ENCODE measurements at regions of chr22 and their contacts with region 1.

Region 1: DNA sequence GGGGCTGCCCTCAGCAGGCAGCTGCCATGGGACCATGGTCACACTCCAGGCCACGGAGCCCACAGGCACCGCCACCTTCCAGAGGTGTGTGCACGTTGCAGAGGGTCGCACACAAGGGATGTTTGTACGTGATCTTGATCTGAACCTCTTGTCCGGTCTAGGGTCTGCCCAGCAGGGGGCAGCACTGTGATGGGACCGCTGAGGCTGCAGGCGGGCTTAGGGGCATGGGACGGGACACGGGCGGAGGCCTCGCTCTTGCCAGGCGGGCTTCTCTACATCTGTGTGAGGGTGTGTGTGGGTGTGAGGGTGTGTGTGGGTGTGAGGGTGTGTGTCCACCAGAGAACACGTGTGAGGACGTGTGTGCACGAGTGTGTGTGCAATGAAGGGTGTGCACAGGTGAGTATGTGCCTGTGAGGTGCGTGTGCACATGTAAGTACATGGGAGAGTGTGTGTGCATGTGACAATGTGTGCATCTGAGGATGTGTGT is 52.4 kb downstream of the CACNA1I start:
- DNase-seq: peak; percentile 67 to 82
- ATAC-seq: peak; percentile 58 to 80 (median 76)
- H3K4me3 ChIP-seq: no peak overlapping the region
- H3K4me3 Mint-ChIP-seq: no peak overlapping the region
- H3K27ac ChIP-seq: no peak overlapping the region
- H3K27ac Mint-ChIP-seq: no peak overlapping the region
- H3K4me1 ChIP-seq: peaks cover 11% of the 10 kb centered on the region
- H3K4me1 Mint-ChIP-seq: peaks cover 6 to 14% of the 10 kb centered on the region in 2 donors
- H3K27me3 ChIP-seq: peaks cover 9% of the 10 kb centered on the region
- H3K27me3 Mint-ChIP-seq: peaks cover 0 to 32% of the 10 kb centered on the region in 2 donors
- CTCF ChIP-seq: peak; percentile 44

Region 2: DNA sequence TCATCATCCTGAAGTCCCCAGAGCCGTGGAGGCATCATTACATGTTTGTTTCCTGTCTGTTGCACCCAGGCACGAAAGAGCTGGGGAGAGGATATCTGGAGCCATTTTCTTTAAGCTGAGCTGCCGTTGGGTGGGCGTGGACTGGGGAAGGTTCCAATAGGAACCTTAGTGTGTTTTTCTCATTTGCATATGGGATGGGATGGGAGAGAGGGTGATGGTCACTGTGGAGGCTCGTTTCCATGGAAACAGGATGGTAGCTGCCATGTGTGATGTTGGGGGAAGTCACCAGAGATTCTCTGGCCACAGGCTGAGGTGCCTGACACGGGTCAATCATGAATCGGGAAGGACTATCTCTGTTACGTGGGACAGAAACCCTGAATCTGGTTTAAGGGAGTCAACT is 12.7 kb before region 1 on chr22:
- intact Hi-C with region 1: no loop called
- DNase-seq: no peak
- ATAC-seq: no peak
- H3K4me3 ChIP-seq: no peak overlapping the region
- H3K4me3 Mint-ChIP-seq: no peak overlapping the region
- H3K27ac ChIP-seq: no peak overlapping the region
- H3K27ac Mint-ChIP-seq: no peak overlapping the region
- H3K4me1 ChIP-seq: no peaks in the 10 kb centered on the region
- H3K4me1 Mint-ChIP-seq: peaks cover 6 to 10% of the 10 kb centered on the region in 2 donors
- H3K27me3 ChIP-seq: peaks cover 5% of the 10 kb centered on the region
- H3K27me3 Mint-ChIP-seq: peaks cover 12 to 16% of the 10 kb centered on the region in 2 donors
- CTCF ChIP-seq: no peak

Region 3: DNA sequence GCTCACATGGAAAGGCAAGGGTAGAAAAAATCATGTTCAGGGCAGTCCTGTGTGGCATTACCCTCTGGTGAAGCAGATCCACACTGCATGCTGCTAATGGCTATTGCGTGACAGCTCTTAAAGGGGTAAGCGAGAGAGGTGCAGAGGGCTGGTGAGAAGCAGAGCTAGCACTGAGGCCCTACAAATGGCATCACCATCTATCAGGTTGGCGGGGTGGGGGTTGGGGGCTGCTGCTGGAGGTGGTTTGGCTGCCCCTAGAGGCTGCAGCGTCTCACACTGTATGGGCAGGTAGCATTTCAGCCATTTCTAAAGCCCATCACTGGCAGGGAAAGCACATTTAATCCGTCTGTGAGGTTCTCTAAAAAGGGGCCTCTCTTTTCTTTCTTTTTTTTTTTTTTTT is 320.4 kb after region 1 on chr22:
- intact Hi-C with region 1: loop called (anchors 5 kb)
- DNase-seq: peak in 1 of 2 donors; percentile 68
- ATAC-seq: peak; percentile 19 to 56 (median 29)
- H3K4me3 ChIP-seq: no peak overlapping the region
- H3K4me3 Mint-ChIP-seq: peak overlapping the region; percentile 21
- H3K27ac ChIP-seq: no peak overlapping the region
- H3K27ac Mint-ChIP-seq: peak overlapping the region; percentile 63 to 71
- H3K4me1 ChIP-seq: peaks cover 37% of the 10 kb centered on the region
- H3K4me1 Mint-ChIP-seq: peaks cover 66 to 68% of the 10 kb centered on the region in 2 donors
- H3K27me3 ChIP-seq: no peaks in the 10 kb centered on the region
- H3K27me3 Mint-ChIP-seq: no peaks in the 10 kb centered on the region
- CTCF ChIP-seq: no peak

Region 4: GRCh38 chr22:40024201-40025061 is 401.5 kb after region 1 on chr22:
- intact Hi-C with region 1: loop called (anchors 1 kb)
- DNase-seq: peak; percentile 39 to 81
- ATAC-seq: peak; percentile 65 to 82 (median 82)
- H3K4me3 ChIP-seq: no peak overlapping the region
- H3K4me3 Mint-ChIP-seq: no peak overlapping the region
- H3K27ac ChIP-seq: no peak overlapping the region
- H3K27ac Mint-ChIP-seq: no peak overlapping the region
- H3K4me1 ChIP-seq: peaks cover 7% of the 10 kb centered on the region
- H3K4me1 Mint-ChIP-seq: no peaks in the 10 kb centered on the region
- H3K27me3 ChIP-seq: no peaks in the 10 kb centered on the region
- H3K27me3 Mint-ChIP-seq: peaks cover 0 to 2% of the 10 kb centered on the region in 2 donors
- CTCF ChIP-seq: peak; percentile 84

Measured in natural killer cell (primary cell).